ENCODE measurements at regions of chr12 and their contacts with region 1.

Region 1: GRCh38 chr12:119988782-119989668 is at the start of gene BICDL1:
- DNase-seq: peak; percentile 98
- H3K4me3 ChIP-seq: peak within 1 kb of the TSS; percentile 53 to 82 (median 58)
- H3K27ac ChIP-seq: peak within 1 kb of the TSS; percentile 21
- H3K4me1 ChIP-seq: peaks cover 15% of the 10 kb centered on the region
- H3K27me3 ChIP-seq: no peaks in the 10 kb centered on the region
- CTCF ChIP-seq: no peak
- total RNA-seq, gene BICDL1: 10.7 to 14.8 TPM

Region 2: DNA sequence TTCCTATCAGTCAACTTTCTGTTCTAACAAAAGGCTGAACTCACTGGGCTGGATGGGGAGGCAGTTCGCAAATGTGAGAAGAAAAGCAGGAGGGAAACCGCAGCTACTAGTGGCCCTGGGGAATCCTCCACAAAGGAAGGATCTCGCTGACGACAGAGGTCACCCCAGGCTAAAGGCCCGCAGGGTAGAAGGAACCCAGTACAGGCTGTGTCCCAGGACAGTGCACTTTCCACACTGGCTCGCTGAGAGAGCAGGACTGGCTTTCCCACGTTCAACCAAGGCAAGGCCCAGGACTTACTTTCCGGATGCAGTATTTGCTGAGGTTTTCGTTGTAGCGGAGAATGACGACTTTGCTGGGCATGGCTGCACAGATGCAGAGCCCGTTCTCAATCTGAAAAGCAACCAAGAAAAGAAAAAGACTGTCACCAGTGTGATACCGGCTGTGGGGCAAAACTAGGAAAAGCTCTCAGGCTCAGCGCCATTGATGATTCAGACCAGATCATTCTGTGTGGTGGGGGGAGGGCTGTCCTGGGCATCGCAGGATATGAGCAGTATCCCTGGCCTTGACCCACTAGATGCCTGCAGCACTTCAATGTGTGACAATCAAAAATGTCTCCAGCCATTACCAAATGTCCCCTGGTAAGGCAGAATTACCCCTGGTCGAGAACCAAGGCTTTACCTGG is 284.8 kb before region 1 on chr12:
- CTCF ChIA-PET with region 1: no interaction called
- dilution Hi-C with region 1: no loop called
- in situ Hi-C with region 1: no loop called
- intact Hi-C with region 1: no loop called
- DNase-seq: no peak
- H3K4me3 ChIP-seq: no peak overlapping the region
- H3K27ac ChIP-seq: no peak overlapping the region
- H3K4me1 ChIP-seq: no peaks in the 10 kb centered on the region
- H3K27me3 ChIP-seq: no peaks in the 10 kb centered on the region
- CTCF ChIP-seq: no peak

Region 3: DNA sequence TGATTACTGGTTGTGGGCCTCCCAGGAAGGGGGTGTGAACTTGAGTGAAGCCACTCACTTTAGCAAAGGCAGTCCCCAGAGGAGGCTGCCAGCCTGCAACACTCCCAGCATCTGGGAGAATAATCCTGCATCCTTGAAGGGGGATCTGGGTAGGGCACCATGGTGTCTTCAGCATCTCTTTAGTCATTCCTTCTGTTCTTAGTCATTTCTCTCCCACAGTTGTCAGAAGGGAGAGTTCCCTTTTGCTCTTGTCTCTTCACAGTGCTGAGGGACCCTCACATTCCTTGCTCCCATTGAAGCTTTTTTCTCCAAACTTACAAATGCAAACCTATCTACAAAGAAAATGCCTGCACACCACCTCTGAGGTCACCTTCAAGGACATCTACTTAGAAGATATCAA is 63.8 kb before region 1 on chr12:
- CTCF ChIA-PET with region 1: no interaction called
- dilution Hi-C with region 1: no loop called
- in situ Hi-C with region 1: no loop called
- intact Hi-C with region 1: no loop called
- DNase-seq: no peak
- H3K4me3 ChIP-seq: no peak overlapping the region
- H3K27ac ChIP-seq: no peak overlapping the region
- H3K4me1 ChIP-seq: no peaks in the 10 kb centered on the region
- H3K27me3 ChIP-seq: no peaks in the 10 kb centered on the region
- CTCF ChIP-seq: no peak

Region 4: DNA sequence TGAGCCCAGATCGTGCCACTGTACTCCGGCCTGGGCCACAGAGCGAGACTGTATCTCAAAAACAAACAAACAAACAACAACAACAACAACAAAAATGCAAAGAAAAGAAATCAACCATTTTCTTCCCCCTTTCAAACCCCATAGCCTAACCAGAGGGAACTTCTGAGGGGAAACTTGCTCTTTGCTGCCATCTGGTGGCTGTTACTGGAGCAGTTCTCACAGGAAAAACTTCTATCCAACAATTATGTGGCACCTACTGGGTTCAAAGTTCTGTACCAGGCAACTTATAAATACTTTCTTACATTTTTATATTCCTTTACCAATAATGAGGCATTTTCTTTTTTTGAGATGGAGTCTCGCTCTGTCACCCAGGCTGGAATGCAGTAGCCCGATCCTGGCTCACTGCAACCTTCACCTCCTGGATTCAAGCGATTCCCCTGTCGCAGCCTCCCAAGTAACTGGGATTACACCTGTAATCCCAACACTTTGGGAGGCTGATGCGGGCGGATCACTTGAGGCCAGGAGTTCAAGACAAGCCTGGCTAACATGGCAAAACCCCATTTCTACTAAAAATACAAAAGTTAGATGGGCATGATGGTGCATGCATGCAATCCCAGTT is 50.9 kb before region 1 on chr12:
- CTCF ChIA-PET with region 1: no interaction called
- dilution Hi-C with region 1: no loop called
- in situ Hi-C with region 1: no loop called
- intact Hi-C with region 1: loop called (anchors 2 kb)
- DNase-seq: peak; percentile 27
- H3K4me3 ChIP-seq: no peak overlapping the region
- H3K27ac ChIP-seq: no peak overlapping the region
- H3K4me1 ChIP-seq: peaks cover 7% of the 10 kb centered on the region
- H3K27me3 ChIP-seq: no peaks in the 10 kb centered on the region
- CTCF ChIP-seq: peak; percentile 80 to 94

Region 5: DNA sequence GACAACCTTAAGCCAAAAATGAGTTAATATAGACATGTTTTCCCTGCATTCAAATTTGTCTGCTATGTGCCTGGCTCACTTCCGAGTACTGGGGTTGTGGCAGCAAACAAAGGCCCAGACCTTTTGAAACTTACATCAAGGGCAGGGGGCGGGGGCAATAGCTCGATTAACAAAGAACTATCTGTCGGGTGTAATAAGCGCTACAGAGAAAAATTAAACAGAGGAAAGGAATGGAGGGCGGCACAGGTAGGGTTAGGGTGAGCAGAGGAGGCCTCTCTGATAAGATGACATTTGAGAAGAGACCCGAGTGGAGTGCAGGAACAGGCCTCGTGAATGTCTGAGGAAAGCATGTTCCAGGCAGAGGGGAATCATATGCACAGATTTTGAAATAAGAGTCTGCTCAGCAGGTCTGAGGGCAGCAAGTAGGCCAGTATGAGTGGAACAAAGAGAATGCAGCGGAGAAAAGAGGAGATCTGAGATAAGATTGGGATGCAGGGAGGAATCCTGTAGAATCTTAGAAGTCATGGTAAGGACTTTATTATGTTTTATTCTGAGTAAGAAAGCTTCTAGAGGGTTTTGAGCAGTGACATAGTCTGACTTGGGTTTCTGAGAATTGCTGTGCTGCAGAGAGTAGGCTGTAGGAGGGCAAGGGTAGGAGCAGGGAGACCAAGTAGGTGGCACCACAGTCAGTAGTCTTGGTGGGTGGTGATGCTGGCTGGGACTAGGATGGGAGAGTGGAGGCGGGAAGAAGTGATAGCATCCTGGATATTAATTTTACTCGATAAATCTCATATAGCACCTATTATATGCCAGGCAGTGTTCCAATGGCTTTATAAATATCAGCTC is 52.6 kb after region 1 on chr12:
- CTCF ChIA-PET with region 1: no interaction called
- dilution Hi-C with region 1: no loop called
- in situ Hi-C with region 1: no loop called
- intact Hi-C with region 1: loop called (anchors 1 kb)
- DNase-seq: no peak
- H3K4me3 ChIP-seq: no peak overlapping the region
- H3K27ac ChIP-seq: peak overlapping the region; percentile 81
- H3K4me1 ChIP-seq: peaks cover 21% of the 10 kb centered on the region
- H3K27me3 ChIP-seq: no peaks in the 10 kb centered on the region
- CTCF ChIP-seq: no peak

Region 6: GRCh38 chr12:120055231-120056021 is 66.4 kb after region 1 on chr12:
- CTCF ChIA-PET with region 1: no interaction called
- dilution Hi-C with region 1: no loop called
- in situ Hi-C with region 1: no loop called
- intact Hi-C with region 1: no loop called
- DNase-seq: peak; percentile 83
- H3K4me3 ChIP-seq: peak overlapping the region in 2 of 3 experiments; percentile 28 to 45
- H3K27ac ChIP-seq: peak overlapping the region; percentile 97
- H3K4me1 ChIP-seq: peaks cover 26% of the 10 kb centered on the region
- H3K27me3 ChIP-seq: no peaks in the 10 kb centered on the region
- CTCF ChIP-seq: no peak